GM13977 (cell line): ENCODE measurements at regions of chr11 and their contacts with region 1.

Region 1: DNA sequence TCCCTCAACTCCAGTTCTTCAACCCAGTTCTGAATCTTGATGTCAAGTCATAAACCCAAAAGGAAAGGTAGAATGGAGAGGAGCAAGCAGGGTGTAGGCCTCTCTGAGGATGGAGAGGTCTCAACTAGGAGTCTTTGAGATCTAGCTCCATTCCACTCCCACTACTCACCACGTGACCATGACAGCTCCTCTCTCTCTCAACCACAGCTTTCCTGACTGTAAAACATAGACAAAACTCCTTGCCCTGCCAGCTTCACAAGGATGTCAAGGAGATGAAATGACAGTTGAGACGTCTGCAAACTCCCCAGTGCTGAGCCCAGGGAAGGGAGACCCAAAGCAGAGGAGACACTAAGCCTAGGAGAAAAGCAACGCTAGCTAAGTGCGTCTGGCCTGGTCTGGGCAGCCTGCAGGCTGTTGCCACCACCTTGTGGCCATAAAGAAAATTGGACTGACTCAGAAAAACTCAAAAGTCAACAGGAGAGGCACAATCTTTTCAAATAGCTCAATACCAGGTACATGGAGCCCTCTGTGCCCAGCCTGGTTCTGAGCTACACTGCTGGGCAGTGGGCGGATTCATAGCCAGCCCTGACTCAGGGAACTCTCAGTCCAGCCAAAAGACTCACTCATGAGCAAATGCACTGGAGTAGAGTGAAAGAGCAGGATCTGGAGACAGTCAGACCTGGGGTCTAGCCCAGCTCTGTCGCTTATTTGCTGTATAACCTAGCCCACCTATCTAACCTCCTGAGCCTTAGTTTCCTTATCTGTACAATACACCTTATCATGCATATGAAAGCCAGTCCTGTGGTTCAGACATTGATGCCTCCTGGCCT is 3.4 kb downstream of the CLPB start:
- DNase-seq: peak; percentile 71
- CTCF ChIP-seq: peak; percentile 80

Region 2: GRCh38 chr11:72293910-72294615 is 136.9 kb before region 1 on chr11:
- in situ Hi-C with region 1: loop called (anchors 10 kb)
- DNase-seq: no peak
- CTCF ChIP-seq: no peak

Region 3: DNA sequence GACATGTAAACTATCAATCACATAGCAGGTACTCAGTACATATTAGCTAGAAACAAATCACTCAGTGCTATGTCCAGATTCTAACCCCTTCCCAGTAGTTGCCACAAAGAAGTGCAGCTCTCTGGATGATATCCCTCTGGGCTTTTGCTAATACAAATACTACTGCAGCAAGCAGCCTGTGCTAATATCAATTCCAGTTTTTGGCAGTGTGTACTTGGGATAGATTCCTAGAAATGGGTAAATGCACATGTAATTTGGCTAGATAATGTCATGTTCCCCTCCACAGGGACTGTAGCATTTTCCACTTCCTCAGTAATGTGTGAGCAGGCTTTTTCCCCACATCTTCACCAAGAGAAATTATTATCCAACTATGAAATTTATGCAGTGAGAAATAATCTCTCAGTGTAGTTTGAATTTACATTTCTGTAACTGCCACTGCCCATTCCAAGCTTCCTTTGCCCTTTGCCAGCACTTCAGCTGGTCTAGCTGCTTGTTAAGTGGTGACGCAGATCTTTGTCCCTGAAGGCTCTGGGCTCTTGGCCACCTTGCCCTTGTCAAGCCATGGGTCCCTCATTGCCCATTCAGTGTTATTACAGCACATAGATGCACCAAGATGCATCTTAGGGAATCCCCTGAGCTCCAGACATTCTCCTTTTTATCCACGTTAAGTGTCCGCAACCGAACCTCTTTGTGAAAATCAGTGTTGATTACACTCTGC is 110.5 kb after region 1 on chr11:
- in situ Hi-C with region 1: no loop called
- DNase-seq: no peak
- CTCF ChIP-seq: no peak